Naive thymus-derived CD4-positive, alpha-beta T cell (primary cell): ENCODE measurements at regions of chr3 and their contacts with region 1.

Region 1: GRCh38 chr3:138547342-138547975 is 46.6 kb downstream of the CEP70 start:
- DNase-seq: no peak
- ATAC-seq: no peak
- H3K4me3 ChIP-seq: no peak overlapping the region
- H3K4me3 Mint-ChIP-seq: no peak overlapping the region
- H3K27ac ChIP-seq: no peak overlapping the region
- H3K27ac Mint-ChIP-seq: no peak overlapping the region
- H3K4me1 ChIP-seq: no peaks in the 10 kb centered on the region
- H3K4me1 Mint-ChIP-seq: peaks cover 0 to 6% (median under 1%) of the 10 kb centered on the region in 7 donors
- H3K27me3 ChIP-seq: no peaks in the 10 kb centered on the region
- H3K27me3 Mint-ChIP-seq: no peaks in the 10 kb centered on the region

Region 2: DNA sequence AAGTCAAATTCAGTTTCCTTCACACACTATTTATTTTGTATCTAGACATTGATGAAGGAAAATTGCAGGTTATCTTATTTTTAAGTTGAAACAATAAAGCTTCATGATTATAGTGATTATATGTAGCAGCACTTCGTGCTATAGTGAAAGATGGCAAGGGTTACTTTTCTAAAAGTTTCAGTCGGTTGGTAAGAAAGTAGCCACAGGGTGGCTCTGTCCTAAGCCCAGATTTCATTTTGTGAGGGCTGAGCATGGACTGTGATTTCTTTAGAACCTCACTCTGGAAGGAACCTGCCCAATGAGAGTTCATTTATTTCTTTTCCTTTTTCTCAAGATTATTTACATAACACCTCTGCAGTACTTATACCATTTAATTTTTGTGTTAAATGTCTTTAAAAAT is 284.4 kb before region 1 on chr3:
- CTCF ChIA-PET with region 1: no interaction called
- POLR2A ChIA-PET with region 1: no interaction called
- intact Hi-C with region 1: no loop called
- DNase-seq: no peak
- ATAC-seq: no peak
- H3K4me3 ChIP-seq: no peak overlapping the region
- H3K4me3 Mint-ChIP-seq: no peak overlapping the region
- H3K27ac ChIP-seq: no peak overlapping the region
- H3K27ac Mint-ChIP-seq: peak overlapping the region in 1 of 9 donors; percentile 43
- H3K4me1 ChIP-seq: no peaks in the 10 kb centered on the region
- H3K4me1 Mint-ChIP-seq: peaks cover 0 to 16% (median 0%) of the 10 kb centered on the region in 7 donors
- H3K27me3 ChIP-seq: no peaks in the 10 kb centered on the region
- H3K27me3 Mint-ChIP-seq: no peaks in the 10 kb centered on the region

Region 3: DNA sequence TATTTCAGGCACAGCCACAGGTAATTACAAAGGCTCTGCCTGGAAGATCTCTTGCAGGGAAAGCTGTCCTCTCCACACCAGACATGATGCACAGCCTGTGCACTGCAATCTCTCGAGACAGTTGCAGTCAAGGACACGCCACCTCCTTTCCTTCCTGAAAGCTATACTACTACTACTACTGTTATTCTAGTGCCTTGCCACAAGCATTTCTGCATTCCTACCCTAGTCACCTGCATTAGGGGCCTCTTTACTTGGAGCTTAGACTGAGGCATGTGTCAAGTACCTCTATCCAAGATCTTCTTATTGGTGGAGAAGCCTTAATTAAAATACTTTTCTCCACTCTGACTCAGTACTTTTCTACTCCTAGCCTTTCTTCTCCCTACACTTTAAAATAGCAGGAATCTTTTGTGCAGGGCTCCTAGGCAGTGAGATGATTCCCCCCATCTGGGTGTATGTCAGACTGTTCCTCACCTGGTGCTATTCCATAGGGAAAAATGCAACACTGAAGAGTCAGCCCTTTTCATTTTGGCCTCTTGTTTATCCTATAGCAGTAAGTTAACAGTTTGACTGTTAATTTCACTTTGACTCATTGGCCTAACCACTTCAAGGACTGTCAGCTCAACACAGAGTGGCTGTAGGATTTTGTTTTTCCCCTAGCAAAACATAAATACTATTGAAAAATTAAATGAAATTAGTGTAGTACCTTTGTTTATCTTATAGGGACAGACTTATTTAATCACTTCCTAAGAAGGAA is 34.2 kb before region 1 on chr3:
- CTCF ChIA-PET with region 1: no interaction called
- POLR2A ChIA-PET with region 1: no interaction called
- intact Hi-C with region 1: loop called in 1 of 2 experiments (anchors 5 kb)
- DNase-seq: peak in 1 of 9 donors; percentile 25
- ATAC-seq: no peak
- H3K4me3 ChIP-seq: no peak overlapping the region
- H3K4me3 Mint-ChIP-seq: peak overlapping the region in 1 of 10 donors; percentile 68
- H3K27ac ChIP-seq: no peak overlapping the region
- H3K27ac Mint-ChIP-seq: peak overlapping the region in 1 of 9 donors; percentile 84
- H3K4me1 ChIP-seq: no peaks in the 10 kb centered on the region
- H3K4me1 Mint-ChIP-seq: peaks cover 0 to 26% (median 0%) of the 10 kb centered on the region in 7 donors
- H3K27me3 ChIP-seq: no peaks in the 10 kb centered on the region
- H3K27me3 Mint-ChIP-seq: no peaks in the 10 kb centered on the region

Region 4: DNA sequence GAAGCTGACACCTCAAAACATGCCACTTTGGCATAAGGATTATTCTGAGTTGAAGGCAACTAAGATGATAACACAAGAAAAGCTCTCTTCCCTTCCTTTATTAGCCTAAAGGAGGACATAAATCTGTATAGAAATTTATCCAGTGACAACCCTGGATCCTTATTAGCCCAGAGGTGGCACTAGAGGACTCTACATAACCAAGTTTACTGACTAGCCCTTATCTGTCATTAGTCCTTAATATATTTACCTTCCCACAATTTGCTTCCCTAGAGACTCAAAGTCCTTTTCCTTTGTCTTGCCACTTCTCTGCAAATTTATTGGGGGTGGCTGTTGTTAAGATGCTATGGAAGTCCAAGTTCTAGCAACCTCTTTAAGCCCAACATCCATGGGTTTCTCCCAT is 19.9 kb after region 1 on chr3:
- CTCF ChIA-PET with region 1: no interaction called
- POLR2A ChIA-PET with region 1: no interaction called
- intact Hi-C with region 1: no loop called
- DNase-seq: no peak
- ATAC-seq: no peak
- H3K4me3 ChIP-seq: no peak overlapping the region
- H3K4me3 Mint-ChIP-seq: no peak overlapping the region
- H3K27ac ChIP-seq: no peak overlapping the region
- H3K27ac Mint-ChIP-seq: no peak overlapping the region
- H3K4me1 ChIP-seq: no peaks in the 10 kb centered on the region
- H3K4me1 Mint-ChIP-seq: peaks cover 0 to 15% (median 7%) of the 10 kb centered on the region in 7 donors
- H3K27me3 ChIP-seq: no peaks in the 10 kb centered on the region
- H3K27me3 Mint-ChIP-seq: no peaks in the 10 kb centered on the region

Region 5: GRCh38 chr3:138587374-138587773 is 39.9 kb after region 1 on chr3:
- CTCF ChIA-PET with region 1: interaction called, 11 read pairs
- POLR2A ChIA-PET with region 1: no interaction called
- intact Hi-C with region 1: no loop called
- DNase-seq: no peak
- ATAC-seq: no peak
- H3K4me3 ChIP-seq: no peak overlapping the region
- H3K4me3 Mint-ChIP-seq: no peak overlapping the region
- H3K27ac ChIP-seq: no peak overlapping the region
- H3K27ac Mint-ChIP-seq: no peak overlapping the region
- H3K4me1 ChIP-seq: no peaks in the 10 kb centered on the region
- H3K4me1 Mint-ChIP-seq: peaks cover 6 to 32% (median 15%) of the 10 kb centered on the region in 7 donors
- H3K27me3 ChIP-seq: no peaks in the 10 kb centered on the region
- H3K27me3 Mint-ChIP-seq: no peaks in the 10 kb centered on the region

Region 6: GRCh38 chr3:140258222-140258724 is 1710.8 kb after region 1 on chr3:
- CTCF ChIA-PET with region 1: no interaction called
- POLR2A ChIA-PET with region 1: no interaction called
- intact Hi-C with region 1: no loop called
- DNase-seq: no peak
- ATAC-seq: no peak
- H3K4me3 ChIP-seq: no peak overlapping the region
- H3K4me3 Mint-ChIP-seq: no peak overlapping the region
- H3K27ac ChIP-seq: no peak overlapping the region
- H3K27ac Mint-ChIP-seq: no peak overlapping the region
- H3K4me1 ChIP-seq: no peaks in the 10 kb centered on the region
- H3K4me1 Mint-ChIP-seq: no peaks in the 10 kb centered on the region
- H3K27me3 ChIP-seq: no peaks in the 10 kb centered on the region
- H3K27me3 Mint-ChIP-seq: peaks cover 0 to 11% (median 6%) of the 10 kb centered on the region in 5 donors